Mammary epithelial cell (primary cell): ENCODE measurements at regions of chr17 and their contacts with region 1.

Region 1: GRCh38 chr17:47970704-47971463 is at the start of gene CDK5RAP3:
- DNase-seq: peak; percentile 99
- H3K4me3 ChIP-seq: peak within 1 kb of the TSS; percentile 49 to 98 (median 78)
- H3K27ac ChIP-seq: peak within 1 kb of the TSS; percentile 60
- H3K4me1 ChIP-seq: peaks cover 27% of the 10 kb centered on the region
- H3K27me3 ChIP-seq: no peaks in the 10 kb centered on the region
- CTCF ChIP-seq: peak; percentile 72 to 93
- total RNA-seq, gene CDK5RAP3: 35.3 to 116 TPM

Region 2: DNA sequence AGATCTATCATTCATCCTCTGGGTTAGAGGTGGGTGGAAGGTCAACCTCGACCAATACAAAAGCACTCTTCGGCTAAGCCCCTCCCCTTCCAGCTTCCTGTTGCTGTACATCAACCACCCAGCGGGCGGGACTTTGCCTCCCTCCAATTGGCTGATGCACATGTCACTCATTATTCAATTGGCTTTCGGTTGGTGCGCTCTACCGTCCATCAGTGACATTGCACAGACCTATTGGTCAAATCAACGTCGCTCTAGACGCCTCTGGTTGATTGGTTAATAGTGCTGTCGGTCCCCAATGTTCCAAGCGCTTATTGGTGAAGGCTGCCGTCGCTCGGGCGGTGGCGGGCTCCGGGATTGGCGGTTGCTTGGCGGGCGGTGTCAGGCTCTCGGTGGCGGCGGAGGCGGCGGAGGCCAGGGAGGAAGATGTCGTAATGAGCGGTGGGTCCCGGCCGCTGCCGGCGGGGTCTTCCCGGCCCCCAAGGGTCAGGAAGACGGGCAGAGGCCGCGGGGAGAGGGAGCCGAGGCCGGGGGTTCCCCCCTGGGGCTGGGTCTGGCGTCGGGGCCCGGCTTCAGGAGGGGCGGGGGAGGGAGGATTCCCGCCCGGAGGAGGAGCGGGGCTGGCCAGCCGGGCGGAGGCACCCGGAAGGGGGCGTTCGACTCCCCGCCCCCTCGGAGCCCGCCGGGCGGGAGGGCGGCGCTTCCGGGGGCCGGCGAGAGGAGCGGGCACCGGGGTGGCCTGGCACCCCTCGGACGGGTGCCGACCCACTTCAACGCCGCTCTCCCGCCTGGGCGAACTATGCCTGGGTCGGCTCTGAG is 74.8 kb before region 1 on chr17 and contains the start of gene SP2:
- CTCF ChIA-PET with region 1: interaction called, 8 read pairs
- dilution Hi-C with region 1: no loop called
- in situ Hi-C with region 1: no loop called
- intact Hi-C with region 1: loop called (anchors 1 kb)
- DNase-seq: peak; percentile 100
- H3K4me3 ChIP-seq: peak within 1 kb of the TSS; percentile 86 to 97 (median 91)
- H3K27ac ChIP-seq: peak within 1 kb of the TSS; percentile 85
- H3K4me1 ChIP-seq: peaks cover 29% of the 10 kb centered on the region
- H3K27me3 ChIP-seq: no peaks in the 10 kb centered on the region
- CTCF ChIP-seq: no peak
- total RNA-seq, gene SP2: 1.5 to 14.9 TPM

Region 3: GRCh38 chr17:48002266-48002915 is 31.5 kb after region 1 on chr17:
- CTCF ChIA-PET with region 1: interaction called, 33 read pairs
- dilution Hi-C with region 1: no loop called
- in situ Hi-C with region 1: no loop called
- intact Hi-C with region 1: no loop called
- DNase-seq: peak; percentile 80
- H3K4me3 ChIP-seq: no peak overlapping the region
- H3K27ac ChIP-seq: peak overlapping the region; percentile 87
- H3K4me1 ChIP-seq: peaks cover 24% of the 10 kb centered on the region
- H3K27me3 ChIP-seq: no peaks in the 10 kb centered on the region
- CTCF ChIP-seq: no peak

Region 4: DNA sequence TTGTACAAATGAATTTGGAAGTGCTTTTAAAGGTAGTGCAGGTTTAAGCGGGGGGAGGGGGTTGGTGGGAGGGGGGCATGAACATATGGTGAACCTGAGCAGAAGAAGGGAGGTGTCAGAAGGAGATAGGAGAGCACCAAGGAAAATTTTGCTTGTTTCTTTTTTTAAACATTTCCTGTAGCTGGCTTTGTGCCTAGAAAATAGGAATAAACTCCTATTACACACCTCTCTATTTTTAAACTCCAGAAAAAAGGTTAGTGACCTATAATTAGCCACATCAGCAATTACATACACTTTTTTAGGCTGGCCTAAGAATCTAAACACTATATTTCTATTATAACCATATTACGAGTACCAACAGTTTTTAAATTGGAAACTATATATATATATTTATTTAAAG is 300.0 kb after region 1 on chr17:
- CTCF ChIA-PET with region 1: no interaction called
- dilution Hi-C with region 1: no loop called
- in situ Hi-C with region 1: no loop called
- intact Hi-C with region 1: no loop called
- DNase-seq: no peak
- H3K4me3 ChIP-seq: no peak overlapping the region
- H3K27ac ChIP-seq: no peak overlapping the region
- H3K4me1 ChIP-seq: no peaks in the 10 kb centered on the region
- H3K27me3 ChIP-seq: peaks cover 5% of the 10 kb centered on the region
- CTCF ChIP-seq: no peak